ENCODE measurements at regions of chr1 and their contacts with region 1.

Region 1: DNA sequence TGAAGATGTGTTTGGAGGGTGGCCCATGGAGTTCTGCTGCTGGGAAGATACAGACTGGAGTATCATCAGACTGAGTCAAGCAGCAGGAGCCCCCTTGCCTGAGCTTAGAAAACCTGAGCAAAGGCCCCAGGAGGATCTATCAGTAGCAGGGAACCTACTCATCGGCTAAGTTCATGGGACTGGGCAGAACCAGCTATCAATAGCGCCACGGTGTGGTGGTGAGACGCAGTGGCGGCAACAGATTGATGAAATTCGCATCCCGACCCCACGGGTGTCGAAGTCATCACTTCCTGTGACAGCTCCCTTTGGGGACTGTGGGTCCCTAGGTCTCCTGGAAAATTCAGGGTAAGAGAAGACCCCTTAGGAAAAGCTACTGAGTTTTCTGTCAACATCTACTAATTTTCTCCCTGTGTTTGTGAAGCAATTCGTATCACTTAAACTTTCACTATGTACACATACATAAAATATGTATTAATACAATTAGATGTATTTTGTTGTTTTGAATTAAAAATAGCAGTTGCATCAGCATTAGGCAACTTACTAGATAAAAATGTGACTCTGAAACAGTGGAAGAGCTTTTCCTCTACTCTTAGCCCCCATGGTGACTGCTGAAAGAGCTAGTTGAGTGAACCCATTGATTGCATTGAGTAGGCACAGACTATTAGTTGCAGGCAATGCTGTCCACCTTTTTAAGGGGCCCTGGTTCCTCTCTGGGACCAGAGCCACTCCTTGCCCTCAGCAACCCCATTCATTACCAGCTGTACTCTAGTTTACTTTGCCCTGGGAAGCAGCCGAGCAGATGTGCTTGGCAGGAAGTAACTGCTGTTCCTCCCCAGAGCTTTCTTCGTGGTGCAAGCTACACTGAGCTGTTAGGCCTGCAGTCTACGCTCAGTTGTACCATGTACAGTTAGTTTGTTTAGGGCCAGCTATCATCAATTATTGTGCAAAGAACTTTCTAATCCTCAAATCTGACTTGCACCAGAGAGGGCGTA is 7.3 kb upstream of the CACNA1S start:
- DNase-seq: peak; percentile 76
- ATAC-seq: peak; percentile 69
- H3K4me3 Mint-ChIP-seq: no peak overlapping the region
- H3K27ac Mint-ChIP-seq: no peak overlapping the region
- H3K4me1 Mint-ChIP-seq: peaks cover 8% of the 10 kb centered on the region
- H3K27me3 Mint-ChIP-seq: peaks cover 4% of the 10 kb centered on the region
- CTCF ChIP-seq: peak; percentile 72

Region 2: GRCh38 chr1:201001960-201002359 is 117.5 kb before region 1 on chr1:
- CTCF ChIA-PET with region 1: no interaction called
- POLR2A ChIA-PET with region 1: no interaction called
- intact Hi-C with region 1: no loop called
- DNase-seq: no peak
- ATAC-seq: no peak
- H3K4me3 Mint-ChIP-seq: no peak overlapping the region
- H3K27ac Mint-ChIP-seq: peak overlapping the region; percentile 55
- H3K4me1 Mint-ChIP-seq: peaks cover 21% of the 10 kb centered on the region
- H3K27me3 Mint-ChIP-seq: no peaks in the 10 kb centered on the region
- CTCF ChIP-seq: no peak

Region 3: GRCh38 chr1:201016211-201016651 is 103.3 kb before region 1 on chr1:
- CTCF ChIA-PET with region 1: interaction called, 13 read pairs
- POLR2A ChIA-PET with region 1: no interaction called
- intact Hi-C with region 1: no loop called
- DNase-seq: no peak
- ATAC-seq: no peak
- H3K4me3 Mint-ChIP-seq: peak overlapping the region; percentile 68
- H3K27ac Mint-ChIP-seq: peak overlapping the region; percentile 97
- H3K4me1 Mint-ChIP-seq: peaks cover 92% of the 10 kb centered on the region
- H3K27me3 Mint-ChIP-seq: no peaks in the 10 kb centered on the region
- CTCF ChIP-seq: no peak

Region 4: DNA sequence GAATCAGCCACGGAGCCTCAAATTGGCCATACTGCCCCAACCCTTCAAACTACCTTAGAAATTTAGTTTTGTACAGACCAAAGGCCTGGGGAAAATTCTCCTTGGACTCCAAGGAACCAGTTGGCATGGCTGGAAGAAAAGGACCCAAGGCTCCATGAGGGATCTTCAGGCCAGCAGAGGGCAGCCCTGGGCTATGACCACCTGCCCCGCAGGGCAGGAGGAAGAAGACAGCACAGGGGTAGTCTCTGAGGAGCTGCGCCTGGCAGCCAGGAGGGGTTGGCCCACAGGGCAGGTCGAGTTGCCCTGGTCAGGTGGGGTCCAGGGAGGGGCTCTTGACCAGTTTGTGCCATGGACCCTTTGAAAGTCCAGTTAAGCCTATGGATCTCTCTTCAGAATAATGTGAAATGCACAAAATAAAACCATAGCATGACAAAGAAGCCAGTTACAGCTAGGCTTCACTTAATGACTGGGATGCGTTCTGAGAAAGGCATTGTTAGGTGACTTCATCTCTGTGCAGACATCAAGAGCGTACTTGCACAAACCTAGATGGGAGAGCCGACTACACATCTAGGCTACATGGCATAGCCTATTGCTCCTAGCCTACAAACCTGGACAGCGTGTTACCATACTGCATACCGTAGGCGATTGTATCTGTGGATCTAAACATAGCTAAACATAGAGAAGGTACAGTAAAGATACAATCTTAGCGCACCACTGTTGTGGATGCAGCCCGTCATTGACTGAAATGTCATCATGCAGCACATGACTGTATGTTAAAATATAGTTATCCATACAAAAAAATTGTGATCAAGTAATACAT is 33.4 kb before region 1 on chr1:
- CTCF ChIA-PET with region 1: interaction called, 46 read pairs
- POLR2A ChIA-PET with region 1: no interaction called
- intact Hi-C with region 1: no loop called
- DNase-seq: peak; percentile 68
- ATAC-seq: peak; percentile 90
- H3K4me3 Mint-ChIP-seq: no peak overlapping the region
- H3K27ac Mint-ChIP-seq: no peak overlapping the region
- H3K4me1 Mint-ChIP-seq: no peaks in the 10 kb centered on the region
- H3K27me3 Mint-ChIP-seq: peaks cover 7% of the 10 kb centered on the region
- CTCF ChIP-seq: peak; percentile 60

Region 5: DNA sequence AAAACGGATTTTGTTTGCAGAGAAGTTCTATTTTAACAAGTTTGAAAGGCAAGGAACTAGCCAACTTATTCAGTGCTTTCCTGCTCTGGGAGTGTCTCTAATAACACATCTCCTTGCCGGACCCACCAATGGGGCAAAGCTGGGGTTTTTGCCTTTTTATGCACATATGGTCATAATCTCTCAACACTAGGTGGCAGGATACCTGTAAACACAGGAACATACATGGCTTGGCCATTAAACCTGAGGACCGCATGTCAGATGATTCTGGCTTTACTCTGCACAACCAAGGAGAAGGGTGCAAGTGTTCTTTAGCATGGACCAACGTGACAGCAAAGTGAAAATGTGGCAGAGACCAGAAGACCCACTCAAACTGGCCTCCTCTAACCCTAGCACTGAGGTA is 29.9 kb after region 1 on chr1:
- CTCF ChIA-PET with region 1: interaction called, 13 read pairs
- POLR2A ChIA-PET with region 1: no interaction called
- intact Hi-C with region 1: no loop called
- DNase-seq: peak; percentile 17
- ATAC-seq: no peak
- H3K4me3 Mint-ChIP-seq: no peak overlapping the region
- H3K27ac Mint-ChIP-seq: no peak overlapping the region
- H3K4me1 Mint-ChIP-seq: peaks cover 12% of the 10 kb centered on the region
- H3K27me3 Mint-ChIP-seq: no peaks in the 10 kb centered on the region
- CTCF ChIP-seq: peak; percentile 51

Region 6: GRCh38 chr1:201154389-201155165 is 35.1 kb after region 1 on chr1 and contains the start of gene TMEM9:
- CTCF ChIA-PET with region 1: interaction called, 13 read pairs
- POLR2A ChIA-PET with region 1: no interaction called
- intact Hi-C with region 1: no loop called
- DNase-seq: peak; percentile 98
- ATAC-seq: peak; percentile 97
- H3K4me3 Mint-ChIP-seq: peak within 1 kb of the TSS; percentile 80
- H3K27ac Mint-ChIP-seq: peak within 1 kb of the TSS; percentile 73
- H3K4me1 Mint-ChIP-seq: peaks cover 17% of the 10 kb centered on the region
- H3K27me3 Mint-ChIP-seq: peaks cover 13% of the 10 kb centered on the region
- CTCF ChIP-seq: no peak
- total RNA-seq, gene TMEM9: 28.7 to 30.6 TPM

Region 7: GRCh38 chr1:201170533-201171062 is 51.1 kb after region 1 on chr1:
- CTCF ChIA-PET with region 1: interaction called, 13 read pairs
- POLR2A ChIA-PET with region 1: interaction called, 3 read pairs
- intact Hi-C with region 1: no loop called
- DNase-seq: peak; percentile 92
- ATAC-seq: peak; percentile 90
- H3K4me3 Mint-ChIP-seq: peak overlapping the region; percentile 75
- H3K27ac Mint-ChIP-seq: peak overlapping the region; percentile 89
- H3K4me1 Mint-ChIP-seq: peaks cover 24% of the 10 kb centered on the region
- H3K27me3 Mint-ChIP-seq: peaks cover 7% of the 10 kb centered on the region
- CTCF ChIP-seq: no peak

Measured in activated CD8-positive, alpha-beta T cell treated with anti-CD3 and anti-CD28 coated beads for 36 hours (primary cell).